Activated CD8-positive, alpha-beta T cell treated with anti-CD3 and anti-CD28 coated beads for 36 hours (primary cell): ENCODE measurements at regions of chr18 and their contacts with region 1.

Region 1: GRCh38 chr18:11995445-11996189 is 14.3 kb downstream of the IMPA2 start:
- DNase-seq: peak; percentile 70
- ATAC-seq: peak; percentile 85
- H3K4me3 Mint-ChIP-seq: no peak overlapping the region
- H3K27ac Mint-ChIP-seq: no peak overlapping the region
- H3K4me1 Mint-ChIP-seq: peaks cover 6% of the 10 kb centered on the region
- H3K27me3 Mint-ChIP-seq: no peaks in the 10 kb centered on the region
- CTCF ChIP-seq: peak; percentile 75

Region 2: DNA sequence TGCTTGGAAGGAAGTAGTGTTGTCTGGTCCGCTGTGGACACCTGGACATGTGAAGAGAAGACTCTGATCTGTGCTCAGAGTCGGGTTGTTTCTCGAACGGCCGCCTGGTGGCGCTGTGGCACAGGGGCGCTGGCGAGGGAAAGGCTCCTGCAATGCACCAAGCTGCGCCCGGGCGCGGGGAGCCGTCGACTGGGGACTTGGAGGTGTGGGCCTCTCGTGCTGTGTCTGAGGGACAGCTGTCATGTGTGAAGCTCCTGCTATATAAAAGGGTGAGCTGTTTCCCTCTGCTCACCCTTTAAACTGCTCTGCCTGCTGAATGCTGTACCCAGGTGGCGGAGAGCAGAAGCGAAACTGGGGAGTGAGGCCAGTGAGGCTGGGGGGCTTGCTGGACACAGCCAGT is 262.6 kb before region 1 on chr18:
- CTCF ChIA-PET with region 1: interaction called, 13 read pairs
- POLR2A ChIA-PET with region 1: no interaction called
- intact Hi-C with region 1: loop called (anchors 10 kb)
- DNase-seq: peak; percentile 80
- ATAC-seq: peak; percentile 91
- H3K4me3 Mint-ChIP-seq: no peak overlapping the region
- H3K27ac Mint-ChIP-seq: no peak overlapping the region
- H3K4me1 Mint-ChIP-seq: no peaks in the 10 kb centered on the region
- H3K27me3 Mint-ChIP-seq: peaks cover 32% of the 10 kb centered on the region
- CTCF ChIP-seq: peak; percentile 90

Region 3: GRCh38 chr18:11885278-11885947 is 110.2 kb before region 1 on chr18:
- CTCF ChIA-PET with region 1: no interaction called
- POLR2A ChIA-PET with region 1: no interaction called
- intact Hi-C with region 1: no loop called
- DNase-seq: no peak
- ATAC-seq: no peak
- H3K4me3 Mint-ChIP-seq: no peak overlapping the region
- H3K27ac Mint-ChIP-seq: no peak overlapping the region
- H3K4me1 Mint-ChIP-seq: no peaks in the 10 kb centered on the region
- H3K27me3 Mint-ChIP-seq: no peaks in the 10 kb centered on the region
- CTCF ChIP-seq: no peak

Region 4: GRCh38 chr18:11932393-11932792 is 63.2 kb before region 1 on chr18:
- CTCF ChIA-PET with region 1: interaction called, 247 read pairs
- POLR2A ChIA-PET with region 1: no interaction called
- intact Hi-C with region 1: loop called (anchors 2 kb)
- DNase-seq: no peak
- ATAC-seq: no peak
- H3K4me3 Mint-ChIP-seq: no peak overlapping the region
- H3K27ac Mint-ChIP-seq: no peak overlapping the region
- H3K4me1 Mint-ChIP-seq: no peaks in the 10 kb centered on the region
- H3K27me3 Mint-ChIP-seq: no peaks in the 10 kb centered on the region
- CTCF ChIP-seq: no peak

Region 5: GRCh38 chr18:11947214-11948191 is 48.1 kb before region 1 on chr18:
- CTCF ChIA-PET with region 1: interaction called, 27 read pairs
- POLR2A ChIA-PET with region 1: no interaction called
- intact Hi-C with region 1: no loop called
- DNase-seq: peak; percentile 82
- ATAC-seq: peak; percentile 89
- H3K4me3 Mint-ChIP-seq: peak overlapping the region; percentile 73
- H3K27ac Mint-ChIP-seq: peak overlapping the region; percentile 87
- H3K4me1 Mint-ChIP-seq: peaks cover 5% of the 10 kb centered on the region
- H3K27me3 Mint-ChIP-seq: no peaks in the 10 kb centered on the region
- CTCF ChIP-seq: no peak

Region 6: GRCh38 chr18:11980555-11981382 is 14.8 kb before region 1 on chr18:
- CTCF ChIA-PET with region 1: interaction called, 14 read pairs
- POLR2A ChIA-PET with region 1: interaction called, 3 read pairs
- intact Hi-C with region 1: no loop called
- DNase-seq: peak; percentile 97
- ATAC-seq: peak; percentile 94
- H3K4me3 Mint-ChIP-seq: peak overlapping the region; percentile 91
- H3K27ac Mint-ChIP-seq: peak overlapping the region; percentile 82
- H3K4me1 Mint-ChIP-seq: peaks cover 17% of the 10 kb centered on the region
- H3K27me3 Mint-ChIP-seq: peaks cover 5% of the 10 kb centered on the region
- CTCF ChIP-seq: no peak

Region 7: DNA sequence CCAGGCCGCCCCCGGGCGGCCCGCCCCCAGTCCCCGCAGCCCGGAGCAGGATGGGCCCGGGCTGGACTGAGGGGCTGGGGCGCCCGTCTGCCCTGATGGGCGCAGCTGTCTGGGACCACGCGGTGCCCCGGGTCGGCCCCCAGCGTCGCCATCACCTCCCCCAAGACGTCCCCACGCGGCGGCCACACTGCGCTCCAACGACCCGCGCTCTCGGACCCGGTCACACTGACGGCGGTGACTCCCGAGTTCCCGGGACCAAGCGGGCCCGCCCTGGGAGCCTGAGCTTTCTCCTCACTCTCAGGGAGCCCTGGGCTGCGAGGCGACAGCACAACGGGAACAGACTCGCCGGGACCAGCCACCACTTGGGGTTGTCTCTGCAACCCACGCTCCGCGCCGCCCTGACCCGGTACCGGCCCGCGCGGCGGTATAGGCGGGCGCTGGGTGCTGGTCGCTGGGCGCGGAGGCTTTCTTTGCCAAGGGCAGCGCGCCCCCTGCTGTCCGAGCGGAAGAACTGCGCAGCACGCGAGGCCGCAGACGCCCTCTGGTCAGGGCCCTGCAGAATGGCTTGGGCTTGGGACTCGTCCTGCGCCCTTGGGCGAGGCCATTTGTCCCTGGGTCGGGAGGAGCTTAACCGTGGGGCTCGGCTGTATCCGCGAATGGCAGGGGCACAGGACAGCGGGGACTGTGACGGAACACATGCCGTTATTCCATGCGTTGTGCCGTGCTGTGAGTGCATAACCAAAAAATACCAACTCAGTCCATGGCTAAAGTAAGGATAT is 43.2 kb after region 1 on chr18:
- CTCF ChIA-PET with region 1: interaction called, 16 read pairs
- POLR2A ChIA-PET with region 1: interaction called, 3 read pairs
- intact Hi-C with region 1: no loop called
- DNase-seq: peak; percentile 74
- ATAC-seq: peak; percentile 93
- H3K4me3 Mint-ChIP-seq: peak overlapping the region; percentile 58
- H3K27ac Mint-ChIP-seq: no peak overlapping the region
- H3K4me1 Mint-ChIP-seq: peaks cover 6% of the 10 kb centered on the region
- H3K27me3 Mint-ChIP-seq: peaks cover 11% of the 10 kb centered on the region
- CTCF ChIP-seq: peak; percentile 99

Region 8: GRCh38 chr18:12049978-12050811 is 54.6 kb after region 1 on chr18:
- CTCF ChIA-PET with region 1: no interaction called
- POLR2A ChIA-PET with region 1: no interaction called
- intact Hi-C with region 1: no loop called
- DNase-seq: no peak
- ATAC-seq: no peak
- H3K4me3 Mint-ChIP-seq: no peak overlapping the region
- H3K27ac Mint-ChIP-seq: no peak overlapping the region
- H3K4me1 Mint-ChIP-seq: peaks cover 3% of the 10 kb centered on the region
- H3K27me3 Mint-ChIP-seq: peaks cover 2% of the 10 kb centered on the region
- CTCF ChIP-seq: no peak